ENCODE measurements at regions of chr1 and their contacts with region 1.

Region 1: DNA sequence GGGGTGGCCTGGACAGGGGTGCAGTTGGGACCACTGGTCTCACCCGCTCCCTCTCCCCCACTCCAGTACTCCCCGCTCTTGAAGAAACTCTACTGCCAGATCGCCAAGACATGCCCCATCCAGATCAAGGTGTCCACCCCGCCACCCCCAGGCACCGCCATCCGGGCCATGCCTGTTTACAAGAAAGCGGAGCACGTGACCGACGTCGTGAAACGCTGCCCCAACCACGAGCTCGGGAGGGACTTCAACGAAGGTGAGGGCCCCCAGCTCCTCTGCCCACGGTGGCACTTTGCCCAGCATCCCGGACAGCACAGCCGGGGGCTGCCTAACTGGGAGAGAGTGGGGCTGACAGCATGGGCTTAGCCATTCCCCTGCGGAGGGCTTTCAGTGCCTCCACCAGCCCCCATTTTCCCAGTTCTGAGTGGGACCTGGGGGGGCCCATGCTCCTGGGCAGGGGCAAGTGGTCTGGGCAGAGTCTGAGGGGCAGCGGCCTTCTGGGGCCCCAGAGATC is 30.2 kb upstream of the CCDC27 start:
- DNase-seq: no peak
- H3K4me3 Mint-ChIP-seq: no peak overlapping the region
- H3K27ac Mint-ChIP-seq: no peak overlapping the region
- H3K4me1 Mint-ChIP-seq: no peaks in the 10 kb centered on the region
- H3K27me3 Mint-ChIP-seq: no peaks in the 10 kb centered on the region

Region 2: DNA sequence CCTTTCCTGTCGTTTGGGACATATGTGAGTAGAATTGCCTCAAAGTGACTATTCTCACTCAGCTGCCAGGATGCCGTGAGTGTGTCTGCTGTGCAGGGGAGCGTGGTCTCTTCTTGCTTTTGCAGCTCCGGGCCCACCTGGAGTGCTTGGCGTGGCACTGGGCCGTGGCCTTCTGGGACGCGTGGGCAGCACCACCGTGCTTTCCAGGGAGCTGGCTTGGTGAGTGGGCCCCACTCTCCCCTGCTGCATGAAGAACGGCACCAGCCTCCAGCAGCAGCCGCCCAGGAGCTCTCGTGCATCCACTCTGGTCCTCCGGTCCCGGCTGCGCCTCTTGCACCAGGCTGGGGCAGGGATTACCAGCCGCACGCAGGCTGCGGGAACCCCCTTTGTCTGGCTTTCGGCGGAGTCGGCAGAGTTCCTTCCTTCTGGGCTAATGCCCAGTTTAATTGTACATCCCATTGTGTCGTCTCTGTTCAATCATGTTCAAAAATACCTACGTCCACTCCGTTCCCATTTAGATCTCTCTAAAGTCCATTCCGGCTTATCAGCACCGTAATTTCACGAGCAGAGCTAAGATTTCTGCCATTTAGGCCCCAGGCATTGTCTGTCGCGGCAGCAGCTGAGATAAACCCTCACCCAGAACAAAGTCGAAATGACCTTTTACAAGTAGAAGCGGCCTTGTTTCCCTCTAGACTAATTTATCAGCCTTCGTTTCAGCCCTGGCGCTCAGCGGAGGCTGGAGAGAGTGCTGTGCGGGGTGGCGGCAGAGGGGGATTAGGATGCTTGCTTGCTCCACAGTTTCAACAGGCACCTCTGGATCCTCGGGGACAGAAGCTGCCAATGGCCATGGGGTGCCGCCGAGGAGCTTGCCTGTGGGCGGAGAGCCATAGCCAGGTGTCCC is 523.4 kb before region 1 on chr1:
- intact Hi-C with region 1: no loop called
- DNase-seq: no peak
- H3K4me3 Mint-ChIP-seq: no peak overlapping the region
- H3K27ac Mint-ChIP-seq: no peak overlapping the region
- H3K4me1 Mint-ChIP-seq: no peaks in the 10 kb centered on the region
- H3K27me3 Mint-ChIP-seq: no peaks in the 10 kb centered on the region

Region 3: GRCh38 chr1:3564921-3565827 is 156.8 kb before region 1 on chr1:
- intact Hi-C with region 1: loop called (anchors 5 kb)
- DNase-seq: peak; percentile 73
- H3K4me3 Mint-ChIP-seq: no peak overlapping the region
- H3K27ac Mint-ChIP-seq: no peak overlapping the region
- H3K4me1 Mint-ChIP-seq: no peaks in the 10 kb centered on the region
- H3K27me3 Mint-ChIP-seq: no peaks in the 10 kb centered on the region

Region 4: GRCh38 chr1:3688356-3689137 is 33.5 kb before region 1 on chr1:
- intact Hi-C with region 1: no loop called
- DNase-seq: no peak
- H3K4me3 Mint-ChIP-seq: no peak overlapping the region
- H3K27ac Mint-ChIP-seq: no peak overlapping the region
- H3K4me1 Mint-ChIP-seq: no peaks in the 10 kb centered on the region
- H3K27me3 Mint-ChIP-seq: no peaks in the 10 kb centered on the region

Region 5: DNA sequence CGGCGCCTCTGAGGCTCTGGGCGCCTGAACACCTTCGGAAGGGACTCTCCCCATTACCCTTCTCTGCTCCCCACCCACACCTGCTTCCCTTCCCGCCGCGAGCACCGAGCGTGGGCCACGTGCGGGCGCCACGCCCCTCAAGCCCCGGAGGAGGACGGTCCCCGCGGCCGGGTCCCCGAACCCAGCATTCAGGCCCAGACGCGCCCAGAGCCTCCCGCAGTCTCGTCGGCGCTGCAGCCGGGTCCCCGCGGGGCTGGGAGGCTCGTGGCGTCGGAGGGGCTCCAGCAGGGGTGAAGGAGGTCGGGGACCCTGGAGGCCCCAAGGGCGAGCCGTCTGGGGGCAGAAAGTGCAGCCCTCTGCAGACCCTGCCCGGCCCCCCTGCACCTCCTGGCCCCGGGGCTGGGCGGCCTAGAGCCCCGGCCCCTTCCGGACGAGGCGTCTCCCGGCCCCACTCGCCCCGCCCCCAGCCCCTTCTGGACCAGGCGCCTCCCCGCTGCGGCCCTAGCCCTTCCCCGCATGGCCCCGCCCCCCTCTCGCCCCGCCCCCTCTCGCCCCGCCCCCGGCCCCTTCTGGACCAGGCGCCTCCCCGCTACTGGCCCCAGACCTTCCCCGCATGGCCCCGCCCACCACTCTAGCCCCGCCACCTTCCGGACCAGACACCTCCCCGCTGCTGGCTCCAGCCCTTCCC is 50.2 kb after region 1 on chr1:
- intact Hi-C with region 1: no loop called
- DNase-seq: peak; percentile 95
- H3K4me3 Mint-ChIP-seq: peak overlapping the region; percentile 81
- H3K27ac Mint-ChIP-seq: peak overlapping the region; percentile 58
- H3K4me1 Mint-ChIP-seq: peaks cover 9% of the 10 kb centered on the region
- H3K27me3 Mint-ChIP-seq: no peaks in the 10 kb centered on the region

Region 6: GRCh38 chr1:3827813-3828307 is 105.8 kb after region 1 on chr1:
- intact Hi-C with region 1: no loop called
- DNase-seq: no peak
- H3K4me3 Mint-ChIP-seq: no peak overlapping the region
- H3K27ac Mint-ChIP-seq: no peak overlapping the region
- H3K4me1 Mint-ChIP-seq: no peaks in the 10 kb centered on the region
- H3K27me3 Mint-ChIP-seq: no peaks in the 10 kb centered on the region

Measured in activated CD4-positive, alpha-beta T cell treated with anti-CD3 and anti-CD28 coated beads, Interleukin-2, amount 10 ng/mL, durations not matched to agents 24 days and 14 days (primary cell).